Activated naive CD8-positive, alpha-beta T cell treated with anti-CD3 and anti-CD28 coated beads, Interleukin-2, amount 10 ng/mL, durations not matched to agents 7 days and 5 days (primary cell): ENCODE measurements at regions of chr22 and their contacts with region 1.

Region 1: DNA sequence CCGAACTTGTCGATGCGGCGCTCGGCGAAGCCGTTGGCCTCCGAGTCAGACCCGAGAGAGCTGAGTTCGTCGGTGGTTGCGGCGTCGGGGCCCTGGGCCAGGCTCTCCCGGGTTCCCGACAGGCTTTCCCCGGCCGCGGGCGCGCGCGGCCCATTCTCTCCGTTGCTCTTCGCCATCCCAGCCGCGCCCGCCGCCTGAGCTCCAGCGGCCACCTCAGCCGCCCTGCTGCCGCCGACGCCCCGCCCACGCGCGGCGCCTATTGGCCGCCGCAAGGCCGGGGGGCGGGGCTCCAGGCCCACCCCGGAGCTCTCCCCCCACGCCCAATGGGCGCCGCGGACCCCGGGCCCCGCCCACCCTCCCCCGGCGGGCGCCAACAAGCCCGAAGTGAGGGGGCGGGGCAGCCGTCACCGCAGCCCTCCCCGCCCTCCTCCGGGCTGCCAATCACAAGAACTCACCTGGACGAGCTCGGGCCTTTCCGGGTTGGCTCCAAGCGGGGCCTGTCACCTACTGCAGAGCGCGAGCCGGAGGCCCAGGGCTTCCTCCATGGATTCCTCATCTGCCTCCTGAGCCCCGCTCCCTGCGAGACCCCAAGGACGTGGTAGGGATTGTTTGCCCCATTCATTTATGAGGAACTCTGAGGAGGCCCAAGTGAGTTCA is at the start of gene TBC1D10A:
- DNase-seq: peak; percentile 96
- ATAC-seq: peak; percentile 85
- H3K4me3 Mint-ChIP-seq: peak within 1 kb of the TSS; percentile 95
- H3K27ac Mint-ChIP-seq: peak within 1 kb of the TSS; percentile 86
- H3K4me1 Mint-ChIP-seq: peaks cover 38% of the 10 kb centered on the region
- H3K27me3 Mint-ChIP-seq: no peaks in the 10 kb centered on the region
- total RNA-seq, gene TBC1D10A: 54.0 to 54.2 TPM

Region 2: GRCh38 chr22:30159561-30160353 is 167.1 kb before region 1 on chr22:
- POLR2A ChIA-PET with region 1: no interaction called
- DNase-seq: no peak
- ATAC-seq: no peak
- H3K4me3 Mint-ChIP-seq: peak overlapping the region; percentile 6
- H3K27ac Mint-ChIP-seq: peak overlapping the region; percentile 86
- H3K4me1 Mint-ChIP-seq: peaks cover 44% of the 10 kb centered on the region
- H3K27me3 Mint-ChIP-seq: no peaks in the 10 kb centered on the region

Region 3: DNA sequence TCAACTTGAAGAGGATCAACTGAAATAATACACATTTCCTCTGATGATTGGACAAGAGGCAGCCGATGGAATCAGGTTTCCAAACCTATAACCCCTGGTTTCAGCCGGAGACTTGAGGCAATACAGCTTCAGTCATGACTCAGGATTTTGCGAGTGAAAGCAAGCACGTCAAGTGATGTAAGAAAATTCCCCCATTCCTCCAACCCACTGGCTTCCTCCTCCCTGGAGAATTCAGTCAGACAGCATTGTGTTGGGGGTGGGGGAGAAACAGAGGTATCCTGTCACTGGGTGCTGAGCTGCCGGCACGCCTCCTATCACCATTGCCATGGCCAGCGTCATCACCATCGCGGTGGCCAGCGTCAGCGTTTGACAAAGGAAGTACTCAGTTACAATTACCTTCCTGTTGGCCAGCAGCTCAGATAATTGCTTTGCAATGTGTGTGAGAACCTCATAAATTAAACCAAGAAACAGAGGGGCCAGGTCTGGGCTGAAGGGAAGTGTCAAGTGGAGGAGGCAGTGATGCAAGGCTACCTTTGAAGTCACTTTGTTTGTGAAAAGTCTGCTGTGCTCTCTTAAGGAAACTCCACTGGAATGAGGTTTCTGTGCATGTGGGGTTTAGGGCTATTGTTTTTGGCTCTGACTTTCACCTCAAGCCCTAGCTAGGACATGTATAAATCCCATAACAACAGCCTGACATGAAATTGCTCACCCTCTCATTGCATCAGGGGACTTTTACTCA is 130.5 kb before region 1 on chr22:
- POLR2A ChIA-PET with region 1: no interaction called
- DNase-seq: no peak
- ATAC-seq: peak; percentile 75
- H3K4me3 Mint-ChIP-seq: peak overlapping the region; percentile 61
- H3K27ac Mint-ChIP-seq: peak overlapping the region; percentile 94
- H3K4me1 Mint-ChIP-seq: peaks cover 69% of the 10 kb centered on the region
- H3K27me3 Mint-ChIP-seq: no peaks in the 10 kb centered on the region

Region 4: DNA sequence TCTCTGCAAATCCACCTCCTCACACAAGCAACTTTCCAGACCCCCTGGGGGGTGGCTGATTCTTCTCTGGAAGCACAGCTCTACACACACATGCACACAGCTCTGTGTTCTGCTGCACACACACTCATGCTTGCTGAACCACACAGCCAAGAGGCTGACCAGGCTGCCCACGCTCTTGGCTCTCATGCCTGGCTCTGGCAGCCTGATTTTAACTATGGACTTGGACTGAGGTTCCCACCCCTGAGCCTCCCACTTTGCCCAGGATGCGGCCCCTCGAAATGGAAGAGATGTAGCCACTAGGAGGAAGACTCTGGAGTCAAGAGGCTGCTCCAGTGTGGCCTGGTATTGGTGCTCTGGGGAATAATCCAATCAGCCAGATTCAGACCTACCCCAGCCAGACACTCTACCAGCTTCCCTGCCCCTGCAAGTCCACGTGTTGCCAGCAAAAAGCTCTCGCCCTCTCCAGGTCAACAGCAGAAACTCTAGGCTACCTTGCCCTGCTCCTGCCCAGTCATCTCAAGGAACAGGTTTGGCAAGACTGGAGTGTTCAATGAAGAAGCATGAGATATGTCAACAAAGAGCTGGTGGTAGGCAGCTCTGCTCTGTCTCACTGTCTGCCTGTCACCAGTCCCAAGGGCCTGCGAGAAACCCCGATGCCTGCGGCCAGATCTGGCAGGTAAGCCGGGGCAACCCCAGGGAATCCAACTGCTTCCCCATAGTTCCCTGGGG is 28.7 kb before region 1 on chr22:
- POLR2A ChIA-PET with region 1: interaction called, 160 read pairs
- DNase-seq: no peak
- ATAC-seq: no peak
- H3K4me3 Mint-ChIP-seq: peak overlapping the region; percentile 28
- H3K27ac Mint-ChIP-seq: peak overlapping the region; percentile 89
- H3K4me1 Mint-ChIP-seq: peaks cover 57% of the 10 kb centered on the region
- H3K27me3 Mint-ChIP-seq: no peaks in the 10 kb centered on the region

Region 5: GRCh38 chr22:30305519-30305905 is 21.3 kb before region 1 on chr22:
- POLR2A ChIA-PET with region 1: interaction called, 160 read pairs
- DNase-seq: peak; percentile 66
- ATAC-seq: peak; percentile 85
- H3K4me3 Mint-ChIP-seq: peak overlapping the region; percentile 73
- H3K27ac Mint-ChIP-seq: peak overlapping the region; percentile 80
- H3K4me1 Mint-ChIP-seq: peaks cover 87% of the 10 kb centered on the region
- H3K27me3 Mint-ChIP-seq: no peaks in the 10 kb centered on the region

Region 6: DNA sequence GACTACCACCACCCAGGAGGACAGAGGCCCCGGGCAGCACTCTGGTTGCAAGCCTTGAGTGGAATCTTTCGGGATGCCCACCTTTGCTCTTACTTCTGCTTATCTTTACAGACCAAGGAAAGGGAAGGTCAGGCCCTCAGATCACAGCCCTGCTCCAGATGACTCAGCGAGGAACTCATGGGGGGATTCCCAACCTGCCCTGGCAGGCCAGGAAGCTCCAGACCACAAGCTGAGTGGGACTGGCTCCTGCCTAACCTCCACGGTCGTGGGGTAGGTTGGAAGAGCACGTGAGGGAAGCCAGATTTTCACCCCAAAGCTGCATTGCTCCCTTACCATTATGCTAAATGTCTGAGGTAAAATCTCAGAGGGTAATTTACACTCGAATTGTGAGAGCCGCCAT is 11.9 kb before region 1 on chr22:
- POLR2A ChIA-PET with region 1: interaction called, 160 read pairs
- DNase-seq: no peak
- ATAC-seq: no peak
- H3K4me3 Mint-ChIP-seq: peak overlapping the region; percentile 16
- H3K27ac Mint-ChIP-seq: peak overlapping the region; percentile 35
- H3K4me1 Mint-ChIP-seq: peaks cover 76% of the 10 kb centered on the region
- H3K27me3 Mint-ChIP-seq: no peaks in the 10 kb centered on the region

Region 7: GRCh38 chr22:30356449-30357235 is 29.8 kb after region 1 on chr22 and contains the starts of genes CCDC157 and SF3A1:
- POLR2A ChIA-PET with region 1: interaction called, 44 read pairs
- DNase-seq: peak; percentile 93
- ATAC-seq: peak; percentile 94
- H3K4me3 Mint-ChIP-seq: peak within 1 kb of the TSS; percentile 94
- H3K27ac Mint-ChIP-seq: peak within 1 kb of the TSS; percentile 82
- H3K4me1 Mint-ChIP-seq: peaks cover 39% of the 10 kb centered on the region
- H3K27me3 Mint-ChIP-seq: no peaks in the 10 kb centered on the region
- total RNA-seq, gene CCDC157: 4.0 to 4.7 TPM
- total RNA-seq, gene SF3A1: 220 to 233 TPM

Region 8: GRCh38 chr22:30408414-30409104 is 81.7 kb after region 1 on chr22:
- POLR2A ChIA-PET with region 1: no interaction called
- DNase-seq: no peak
- ATAC-seq: no peak
- H3K4me3 Mint-ChIP-seq: no peak overlapping the region
- H3K27ac Mint-ChIP-seq: no peak overlapping the region
- H3K4me1 Mint-ChIP-seq: peaks cover 16% of the 10 kb centered on the region
- H3K27me3 Mint-ChIP-seq: no peaks in the 10 kb centered on the region

Region 9: DNA sequence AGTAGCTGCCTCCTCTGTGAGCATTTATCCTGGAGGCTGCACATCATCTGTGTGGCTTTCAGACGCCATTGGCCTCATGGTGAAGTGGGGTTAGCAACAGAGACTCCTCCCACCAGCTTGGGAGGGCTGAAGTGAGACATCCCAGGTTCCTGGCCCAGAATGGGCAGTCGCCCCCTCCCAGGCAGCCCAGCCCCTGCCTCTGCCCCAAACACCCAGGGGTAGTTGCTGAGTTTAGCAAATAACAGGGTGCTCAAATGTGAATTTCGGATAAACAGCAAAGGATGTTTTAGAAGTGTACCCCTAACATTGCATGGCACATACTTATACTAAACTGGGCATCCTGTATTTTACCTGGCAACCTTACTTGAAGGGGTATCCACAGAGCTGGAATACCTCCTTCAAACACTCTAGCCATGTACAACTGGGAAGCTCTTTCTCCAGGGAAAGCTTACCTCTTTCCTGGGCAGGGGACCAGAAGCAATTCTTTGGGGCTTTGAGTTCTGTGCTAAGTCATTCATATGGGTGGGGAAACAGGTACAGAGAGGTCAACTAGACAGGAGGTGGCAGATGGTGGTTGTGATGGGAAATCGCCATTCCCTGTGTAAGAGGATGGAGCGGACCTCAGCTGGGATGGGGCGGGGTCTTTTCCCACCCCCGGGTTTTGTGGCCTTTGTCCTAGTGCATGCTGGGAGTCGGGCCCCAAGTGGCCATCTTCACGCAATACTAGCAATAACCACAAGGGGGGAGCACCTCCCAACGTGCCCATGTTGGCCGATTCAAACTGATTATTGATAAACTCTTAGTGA is 118.0 kb after region 1 on chr22:
- POLR2A ChIA-PET with region 1: no interaction called
- DNase-seq: peak; percentile 59
- ATAC-seq: no peak
- H3K4me3 Mint-ChIP-seq: no peak overlapping the region
- H3K27ac Mint-ChIP-seq: no peak overlapping the region
- H3K4me1 Mint-ChIP-seq: peaks cover 24% of the 10 kb centered on the region
- H3K27me3 Mint-ChIP-seq: peaks cover 31% of the 10 kb centered on the region